Upper lobe of right lung (tissue), 1 donor: ENCODE measurements at regions of chr1 and their contacts with region 1.

Region 1: GRCh38 chr1:62159940-62160348 is 34.7 kb upstream of the L1TD1 start:
- DNase-seq: no peak
- ATAC-seq: no peak
- H3K4me3 ChIP-seq: no peak overlapping the region
- H3K27ac ChIP-seq: no peak overlapping the region
- H3K4me1 ChIP-seq: no peaks in the 10 kb centered on the region
- H3K27me3 ChIP-seq: no peaks in the 10 kb centered on the region
- CTCF ChIP-seq: no peak

Region 2: DNA sequence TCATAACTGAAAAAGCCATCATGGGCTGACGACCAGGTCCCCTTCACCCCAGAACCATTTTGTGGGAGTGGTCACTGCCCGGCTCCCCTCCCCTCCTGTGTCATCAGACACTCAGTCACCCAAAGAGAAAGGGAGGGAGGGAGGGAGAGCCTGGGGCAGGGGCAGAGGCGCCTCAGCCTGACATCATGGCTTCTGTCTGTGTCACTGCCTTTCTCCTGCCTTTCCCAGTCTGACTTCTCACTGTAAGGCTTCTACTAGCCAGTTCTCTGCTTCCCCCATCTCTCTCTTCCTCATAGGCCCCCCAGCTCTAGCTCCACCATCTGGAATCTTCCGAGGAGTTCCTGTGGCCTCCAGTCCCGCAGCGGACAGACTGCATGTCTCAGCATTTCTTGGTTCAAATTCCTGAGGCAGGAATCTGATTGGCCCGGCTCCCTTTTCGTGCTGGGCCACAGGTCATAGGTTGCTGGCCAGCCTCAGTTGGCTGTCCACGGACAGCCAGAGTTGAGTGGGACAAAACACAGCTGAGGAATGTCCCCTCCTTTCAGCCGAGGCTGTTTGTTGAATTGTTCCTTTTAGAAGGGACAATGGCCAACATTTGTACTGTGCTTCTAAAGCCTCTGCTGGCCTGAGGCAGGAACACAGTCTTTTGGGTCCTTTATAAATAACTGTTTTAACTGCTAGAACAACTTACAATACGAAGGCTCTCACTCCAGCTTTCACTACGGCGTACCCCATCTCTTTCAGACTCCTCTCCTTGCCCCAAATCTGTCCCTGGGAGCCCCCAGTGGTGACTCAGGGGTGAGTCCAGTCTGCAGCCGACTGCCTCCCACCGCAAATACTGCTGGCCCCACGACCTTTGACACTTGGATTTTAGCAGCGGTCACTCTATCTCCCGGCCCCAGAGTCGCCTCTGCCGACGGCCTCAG is 178.0 kb after region 1 on chr1:
- intact Hi-C with region 1: no loop called
- DNase-seq: no peak
- ATAC-seq: peak; percentile 49
- H3K4me3 ChIP-seq: no peak overlapping the region
- H3K27ac ChIP-seq: peak overlapping the region; percentile 72
- H3K4me1 ChIP-seq: no peaks in the 10 kb centered on the region
- H3K27me3 ChIP-seq: no peaks in the 10 kb centered on the region
- CTCF ChIP-seq: peak; percentile 20

Region 3: DNA sequence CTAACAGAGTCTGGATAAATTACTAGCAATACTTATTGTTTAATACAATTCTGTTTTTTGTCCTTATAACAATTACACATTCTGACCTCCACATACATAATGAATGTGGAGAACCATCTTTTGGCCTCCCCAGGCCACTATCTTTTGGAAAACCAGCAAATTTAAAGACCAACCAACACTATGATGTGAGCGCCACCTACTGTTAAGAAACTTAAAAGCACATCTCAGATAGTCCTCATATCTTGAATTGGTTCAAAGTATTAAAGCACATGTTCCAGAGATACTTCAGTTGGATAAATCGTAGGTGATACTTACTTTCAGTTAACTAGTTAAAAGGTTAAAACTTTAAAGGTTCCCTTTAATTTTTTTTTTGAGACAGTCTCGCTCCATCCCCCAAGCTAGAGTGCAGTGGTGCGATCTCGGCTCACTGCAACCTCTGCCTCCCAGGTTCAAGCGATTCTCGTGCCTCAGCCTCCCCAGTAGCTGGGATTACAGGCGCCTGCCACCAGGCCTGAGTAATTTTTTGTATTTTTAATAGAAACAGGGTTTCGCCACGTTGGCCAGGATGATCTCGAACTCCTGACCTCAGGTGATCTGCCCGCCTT is 247.6 kb after region 1 on chr1:
- intact Hi-C with region 1: loop called (anchors 5 kb)
- DNase-seq: no peak
- ATAC-seq: peak; percentile 83
- H3K4me3 ChIP-seq: no peak overlapping the region
- H3K27ac ChIP-seq: no peak overlapping the region
- H3K4me1 ChIP-seq: no peaks in the 10 kb centered on the region
- H3K27me3 ChIP-seq: no peaks in the 10 kb centered on the region
- CTCF ChIP-seq: peak; percentile 80